ENCODE measurements at regions of chr6 and their contacts with region 1.

Region 1: DNA sequence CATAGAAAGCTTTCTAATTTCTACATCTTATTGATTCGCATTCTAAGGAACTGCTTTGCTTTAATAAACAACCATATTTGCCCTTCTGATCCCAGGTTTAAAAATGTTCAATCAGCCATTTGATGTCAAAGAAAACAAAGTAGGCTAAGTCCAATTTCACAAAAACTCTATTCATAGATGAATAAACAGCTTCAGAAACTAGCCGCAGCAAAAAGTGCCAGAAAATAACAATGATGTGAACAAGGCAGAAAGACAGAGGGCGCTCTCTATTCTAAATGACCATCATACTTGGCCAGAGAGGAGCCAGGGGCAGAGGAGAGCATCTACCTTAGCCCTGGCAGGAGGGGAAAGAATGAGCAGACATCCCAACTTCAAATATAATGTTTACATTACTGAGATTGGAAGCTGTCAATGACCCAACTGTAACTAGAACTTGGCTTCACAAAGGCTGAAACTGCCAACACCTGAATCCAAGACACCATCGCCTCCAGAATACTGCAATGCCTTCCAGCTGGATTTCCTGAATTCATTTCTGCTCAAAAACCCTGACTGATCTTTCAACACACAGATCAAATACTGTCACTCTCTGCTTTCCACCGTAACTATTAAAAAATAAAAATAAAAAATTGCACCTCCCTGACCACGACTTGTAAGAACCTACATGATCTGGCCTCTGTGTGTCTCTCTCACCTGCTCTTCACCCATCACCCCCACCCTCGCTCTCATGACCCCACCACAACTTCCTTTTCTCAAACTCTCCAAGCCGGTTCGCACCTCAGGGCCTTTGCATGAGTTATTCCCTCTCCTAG is 9.5 kb downstream of the CNKSR3 start:
- H3K4me3 ChIP-seq: no peak overlapping the region
- H3K27ac ChIP-seq: no peak overlapping the region
- H3K4me1 ChIP-seq: no peaks in the 10 kb centered on the region
- CTCF ChIP-seq: peak; percentile 38; the same call in 1 of the 2 replicates

Region 2: DNA sequence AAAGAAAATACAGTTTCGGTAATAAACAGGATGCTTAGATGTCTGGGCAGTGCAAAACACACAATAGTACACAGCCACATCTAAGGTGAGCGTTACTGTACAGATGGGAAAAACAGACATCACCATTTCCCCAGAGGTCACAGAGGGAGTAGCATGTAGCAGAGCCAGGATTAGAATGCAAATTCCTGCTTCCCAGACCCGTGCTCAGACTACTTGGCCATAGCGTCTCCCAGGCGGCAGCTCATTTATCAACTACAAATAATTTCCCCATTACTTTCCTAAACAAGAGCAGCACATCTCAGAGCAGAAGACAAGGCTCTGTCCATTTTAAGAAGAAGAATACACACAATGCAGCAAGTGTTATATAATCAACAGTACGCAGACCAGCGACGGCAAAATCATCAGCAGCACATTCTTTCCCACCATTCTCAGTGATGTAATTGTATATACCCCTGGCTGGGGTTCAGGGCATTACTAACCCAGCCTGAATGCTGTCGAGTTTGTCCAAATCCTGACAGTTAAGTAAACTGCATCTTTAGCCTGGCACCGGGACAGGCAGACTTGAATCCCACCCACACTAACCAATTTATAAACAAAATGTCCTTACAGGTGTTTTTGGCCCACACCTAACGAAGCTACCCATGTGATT is 52.4 kb before region 1 on chr6:
- CTCF ChIA-PET with region 1: interaction called, 11 read pairs
- POLR2A ChIA-PET with region 1: no interaction called
- H3K4me3 ChIP-seq: peak overlapping the region; percentile 9; the same call in 1 of the 2 replicates
- H3K27ac ChIP-seq: peak overlapping the region; percentile 11; the same call in 1 of the 2 replicates
- H3K4me1 ChIP-seq: peaks cover 17% of the 10 kb centered on the region
- CTCF ChIP-seq: peak; percentile 31; the same call in 1 of the 2 replicates

Region 3: DNA sequence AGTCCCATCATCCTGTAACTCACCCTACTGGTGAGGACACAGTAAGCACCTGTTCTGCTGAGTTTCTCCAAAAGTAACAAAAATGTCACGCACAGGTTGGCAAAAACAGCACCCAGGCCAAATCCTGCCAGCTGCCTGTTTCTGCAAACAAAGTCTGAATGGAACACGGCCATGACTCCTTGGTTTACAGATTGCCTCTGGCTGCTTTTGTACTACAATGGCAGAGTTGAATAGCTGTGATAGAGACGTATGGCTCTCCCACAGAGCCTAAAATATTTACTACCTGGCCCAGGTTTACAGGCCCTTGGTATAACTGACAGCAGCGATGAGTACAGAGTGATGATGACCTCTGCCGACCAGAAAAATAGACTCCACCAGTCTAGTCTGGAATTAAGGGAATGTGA is 43.1 kb before region 1 on chr6:
- CTCF ChIA-PET with region 1: interaction called, 12 read pairs
- POLR2A ChIA-PET with region 1: no interaction called
- H3K4me3 ChIP-seq: no peak overlapping the region
- H3K27ac ChIP-seq: no peak overlapping the region
- H3K4me1 ChIP-seq: peaks cover 16% of the 10 kb centered on the region
- CTCF ChIP-seq: no peak

Region 4: DNA sequence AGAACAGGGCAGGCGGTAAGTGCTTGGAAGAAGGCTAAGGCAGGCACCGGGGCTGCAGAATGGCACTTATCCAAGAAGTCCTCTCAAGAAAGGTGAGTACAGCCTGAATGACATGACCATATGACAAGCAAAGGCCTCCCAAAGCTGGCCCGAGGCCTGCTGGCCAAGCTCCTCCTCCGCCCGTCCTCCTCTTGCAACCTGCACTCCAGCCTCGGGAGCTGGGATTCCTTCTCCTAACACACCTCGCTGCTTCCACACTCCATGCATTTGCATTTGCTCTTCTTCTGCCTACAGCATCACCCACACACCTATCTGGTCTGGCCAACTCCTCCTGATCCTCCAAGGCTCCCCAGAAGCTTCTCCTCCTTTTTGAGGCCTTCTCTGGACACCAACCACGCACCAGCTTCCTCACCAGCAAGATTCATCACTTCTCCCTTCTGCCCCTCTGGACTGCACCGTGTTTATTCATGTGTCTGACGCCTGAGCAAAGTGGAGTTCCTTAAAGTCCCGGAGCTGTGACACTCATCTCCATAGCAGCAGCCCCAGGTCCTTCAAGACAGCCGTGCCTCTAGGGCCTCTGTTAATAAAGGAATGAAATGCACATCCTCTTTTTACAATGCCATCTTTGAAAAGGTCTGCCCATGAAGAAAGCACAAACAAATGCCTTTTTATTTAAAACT is 22.8 kb before region 1 on chr6:
- CTCF ChIA-PET with region 1: interaction called, 14 read pairs
- POLR2A ChIA-PET with region 1: no interaction called
- H3K4me3 ChIP-seq: no peak overlapping the region
- H3K27ac ChIP-seq: no peak overlapping the region
- H3K4me1 ChIP-seq: peaks cover 32% of the 10 kb centered on the region
- CTCF ChIP-seq: no peak

Region 5: DNA sequence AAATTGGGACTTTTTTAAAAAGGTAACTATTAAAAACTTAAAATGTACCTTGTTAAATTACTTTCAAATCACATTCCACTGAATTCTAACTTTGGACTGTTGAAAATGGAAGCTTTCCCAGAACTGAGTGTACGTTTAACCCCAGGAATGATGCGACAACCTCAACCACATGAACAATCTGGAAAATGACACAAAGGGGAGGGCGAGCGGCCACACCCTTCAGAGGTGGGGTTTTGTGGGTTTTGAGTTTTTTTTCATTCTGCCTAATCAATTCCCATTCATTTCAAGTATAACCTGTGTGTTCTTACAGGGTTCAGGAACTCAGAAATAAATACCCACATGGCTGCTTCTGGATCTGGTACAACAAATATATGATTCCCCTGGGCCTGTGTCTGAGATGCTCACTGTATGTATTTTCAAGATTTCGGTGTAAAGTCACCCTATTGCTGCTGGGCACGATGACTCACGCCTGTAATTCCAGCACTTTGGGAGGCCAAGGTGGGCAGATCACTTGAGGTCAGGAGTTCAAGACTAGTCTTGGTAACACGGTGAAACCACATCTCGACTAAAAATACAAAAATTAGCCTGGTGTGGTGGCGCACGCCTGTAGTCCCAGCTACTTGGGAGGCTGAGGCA is 12.1 kb before region 1 on chr6:
- CTCF ChIA-PET with region 1: interaction called, 46 read pairs
- POLR2A ChIA-PET with region 1: no interaction called
- H3K4me3 ChIP-seq: no peak overlapping the region
- H3K27ac ChIP-seq: no peak overlapping the region
- H3K4me1 ChIP-seq: peaks cover 14% of the 10 kb centered on the region
- CTCF ChIP-seq: no peak

Region 6: GRCh38 chr6:154515826-154516225 is 14.9 kb after region 1 on chr6:
- CTCF ChIA-PET with region 1: interaction called, 30 read pairs
- POLR2A ChIA-PET with region 1: interaction called, 11 read pairs
- H3K4me3 ChIP-seq: no peak overlapping the region
- H3K27ac ChIP-seq: no peak overlapping the region
- H3K4me1 ChIP-seq: peaks cover 4% of the 10 kb centered on the region; the same call in 1 of the 2 replicates
- CTCF ChIP-seq: no peak

Measured in HEK293 (cell line).